ENCODE measurements at regions of chr4 and their contacts with region 1.

Region 1: GRCh38 chr4:112099701-112100297 is 45.5 kb upstream of the FAM241A start:
- DNase-seq: no peak

Region 2: DNA sequence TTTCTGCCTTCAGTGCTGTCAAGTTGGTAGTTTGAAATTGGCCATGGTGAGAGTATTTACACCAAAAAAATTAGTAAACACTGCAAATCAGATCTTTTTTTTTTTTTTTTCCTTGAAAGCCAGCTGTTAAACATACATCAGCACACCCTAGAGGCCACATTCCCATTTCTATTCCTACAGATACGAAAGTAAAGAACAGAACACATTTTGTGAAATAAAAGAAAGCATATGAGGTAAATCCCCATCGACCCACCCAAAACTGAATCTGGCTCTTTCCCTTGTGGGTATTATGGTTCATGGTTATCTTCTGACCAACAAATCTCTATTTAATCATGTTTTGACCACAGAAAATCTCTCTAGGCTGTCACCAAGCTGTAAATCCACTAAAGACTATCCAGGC is 90.0 kb after region 1 on chr4:
- intact Hi-C with region 1: loop called (anchors 1 kb)
- DNase-seq: no peak

Region 3: GRCh38 chr4:112231779-112232713 is 132.2 kb after region 1 on chr4 and contains the start of gene AP1AR:
- intact Hi-C with region 1: loop called (anchors 1 kb)
- DNase-seq: peak; percentile 66 to 96 (median 80)

Region 4: DNA sequence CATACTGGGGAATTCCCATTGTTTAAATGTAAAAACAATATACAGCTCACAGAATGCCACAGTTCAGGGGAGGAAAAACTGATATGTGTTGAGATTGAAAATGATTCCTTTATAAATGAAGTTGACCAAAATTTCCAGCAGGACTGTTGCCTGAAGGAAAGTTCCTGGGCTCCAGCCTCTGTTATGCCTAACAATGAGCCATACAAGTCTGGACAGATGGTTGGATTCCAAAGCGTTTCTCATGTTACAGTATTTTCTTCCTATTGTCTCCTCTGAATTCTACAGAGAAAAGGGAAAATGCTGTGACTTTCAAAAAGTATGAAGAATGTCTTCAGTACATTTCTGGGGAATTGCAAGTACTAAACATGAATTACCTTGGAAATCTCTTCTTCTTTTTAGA is 270.7 kb after region 1 on chr4:
- intact Hi-C with region 1: no loop called
- DNase-seq: no peak

Region 5: DNA sequence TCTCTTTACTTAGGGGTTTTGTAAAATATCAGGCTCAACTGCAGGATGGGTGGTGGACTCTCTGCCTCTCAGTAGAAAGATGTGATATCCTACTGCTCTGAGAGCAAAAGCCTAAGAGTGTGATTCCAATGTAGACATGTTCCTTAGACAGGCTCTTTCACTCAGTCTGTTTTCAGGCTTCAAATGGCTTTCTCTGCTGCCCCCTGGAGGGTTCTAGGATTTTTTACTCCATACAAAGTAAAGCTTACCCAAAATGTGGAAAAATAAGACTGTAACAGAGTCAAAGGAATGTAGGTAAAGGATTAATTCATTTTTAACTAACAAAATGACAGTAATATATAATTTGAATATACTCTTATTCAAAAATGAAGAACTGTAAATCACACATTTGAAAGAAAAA is 504.8 kb after region 1 on chr4:
- intact Hi-C with region 1: loop called (anchors 10 kb)
- DNase-seq: peak in 4 of 10 donors; percentile 18 to 58 (median 50)

Measured in posterior cingulate gyrus (tissue), 11 donors.